ENCODE measurements at regions of chr7 and their contacts with region 1.

Region 1: GRCh38 chr7:23404546-23405239 is 65.6 kb downstream of the IGF2BP3 start:
- DNase-seq: no peak
- ATAC-seq: no peak
- H3K4me3 ChIP-seq: no peak overlapping the region
- H3K27ac ChIP-seq: no peak overlapping the region
- H3K4me1 ChIP-seq: no peaks in the 10 kb centered on the region
- H3K27me3 ChIP-seq: no peaks in the 10 kb centered on the region
- CTCF ChIP-seq: no peak

Region 2: GRCh38 chr7:21996641-21997040 is 1408.1 kb before region 1 on chr7:
- intact Hi-C with region 1: no loop called
- DNase-seq: no peak
- ATAC-seq: no peak
- H3K4me3 ChIP-seq: no peak overlapping the region
- H3K27ac ChIP-seq: no peak overlapping the region
- H3K4me1 ChIP-seq: peaks cover 0 to 5% (median 0%) of the 10 kb centered on the region in 9 donors
- H3K27me3 ChIP-seq: peaks cover 0 to 6% (median 0%) of the 10 kb centered on the region in 7 donors
- CTCF ChIP-seq: no peak

Region 3: DNA sequence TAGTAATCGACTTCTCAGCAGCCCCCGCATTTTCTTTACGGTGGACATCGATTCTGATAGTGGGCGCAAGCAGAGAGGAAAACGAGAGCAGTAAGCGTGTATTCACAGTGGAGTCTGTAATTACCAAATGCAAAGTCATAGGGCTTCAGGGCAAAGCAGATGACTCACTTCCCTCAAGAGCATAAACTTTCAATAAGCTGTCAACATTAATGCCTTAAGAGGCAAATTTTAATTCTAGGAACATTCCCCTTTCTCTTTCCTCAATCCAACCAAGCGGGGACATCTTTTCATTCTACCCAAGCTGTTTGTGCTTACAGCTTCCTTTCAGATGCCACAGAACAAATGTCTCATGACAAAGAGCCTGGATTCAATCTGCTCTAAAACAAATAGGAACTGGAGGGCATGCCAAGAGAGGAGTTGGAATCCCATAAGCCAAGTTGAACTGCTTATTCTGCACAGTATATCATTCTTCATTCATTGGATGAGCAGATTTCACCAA is 57.0 kb before region 1 on chr7:
- intact Hi-C with region 1: loop called in 1 of 10 experiments (anchors 10 kb)
- DNase-seq: no peak
- ATAC-seq: no peak
- H3K4me3 ChIP-seq: peak overlapping the region in 1 of 10 donors; percentile 43
- H3K27ac ChIP-seq: peak overlapping the region in 1 of 10 donors; percentile 1
- H3K4me1 ChIP-seq: peaks cover 0 to 33% (median 0%) of the 10 kb centered on the region in 9 donors
- H3K27me3 ChIP-seq: no peaks in the 10 kb centered on the region
- CTCF ChIP-seq: no peak

Region 4: GRCh38 chr7:23431702-23432199 is 27.1 kb after region 1 on chr7:
- intact Hi-C with region 1: no loop called
- DNase-seq: no peak
- ATAC-seq: no peak
- H3K4me3 ChIP-seq: no peak overlapping the region
- H3K27ac ChIP-seq: no peak overlapping the region
- H3K4me1 ChIP-seq: no peaks in the 10 kb centered on the region
- H3K27me3 ChIP-seq: peaks cover 0 to 44% (median 14%) of the 10 kb centered on the region in 7 donors
- CTCF ChIP-seq: no peak

Region 5: GRCh38 chr7:23494009-23494408 is 89.3 kb after region 1 on chr7:
- intact Hi-C with region 1: no loop called
- DNase-seq: no peak
- ATAC-seq: no peak
- H3K4me3 ChIP-seq: no peak overlapping the region
- H3K27ac ChIP-seq: no peak overlapping the region
- H3K4me1 ChIP-seq: peaks cover 0 to 6% (median 0%) of the 10 kb centered on the region in 9 donors
- H3K27me3 ChIP-seq: no peaks in the 10 kb centered on the region
- CTCF ChIP-seq: no peak

Region 6: DNA sequence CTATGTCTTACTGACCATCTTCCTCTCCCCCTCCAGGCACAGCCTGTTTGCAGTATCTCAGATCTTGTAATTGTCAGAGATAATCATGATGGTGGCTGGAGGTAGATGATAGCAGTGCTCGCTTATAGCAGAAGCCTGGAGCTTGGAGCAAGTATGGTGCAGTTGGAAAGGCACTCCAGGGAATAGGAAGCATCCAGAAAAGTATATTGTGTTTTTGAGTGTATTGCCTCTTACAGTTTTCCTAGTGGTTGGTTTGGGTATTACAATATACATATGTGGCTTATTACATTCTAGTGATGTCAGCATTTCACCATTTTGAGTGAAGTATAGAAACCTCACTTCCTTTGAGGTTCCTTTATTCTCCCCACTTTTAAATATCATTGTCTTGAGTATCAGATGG is 406.8 kb after region 1 on chr7:
- intact Hi-C with region 1: no loop called
- DNase-seq: no peak
- ATAC-seq: no peak
- H3K4me3 ChIP-seq: no peak overlapping the region
- H3K27ac ChIP-seq: no peak overlapping the region
- H3K4me1 ChIP-seq: no peaks in the 10 kb centered on the region
- H3K27me3 ChIP-seq: no peaks in the 10 kb centered on the region
- CTCF ChIP-seq: peak in 4 of 9 donors; percentile 6 to 50 (median 19)

Measured in heart right ventricle (tissue), 16 donors.